Sigmoid colon (tissue), 7 donors: ENCODE measurements at regions of chr4 and their contacts with region 1.

Region 1: GRCh38 chr4:86934771-86935565 is at the start of gene AFF1:
- DNase-seq: peak; percentile 97
- H3K4me3 ChIP-seq: peak within 1 kb of the TSS; percentile 81 to 97 (median 93)
- H3K27ac ChIP-seq: peak within 1 kb of the TSS; percentile 95 to 99 (median 99)
- H3K4me1 ChIP-seq: peaks cover 0 to 42% (median 29%) of the 10 kb centered on the region in 4 donors
- H3K27me3 ChIP-seq: no peaks in the 10 kb centered on the region
- CTCF ChIP-seq: peak in 1 of 4 experiments; percentile 46
- EP300 ChIP-seq: peak in 1 of 4 donors; percentile 41
- POLR2A ChIP-seq: peak; percentile 20 to 47
- total RNA-seq, gene AFF1: 61.7 to 100 (median 85.4) TPM

Region 2: DNA sequence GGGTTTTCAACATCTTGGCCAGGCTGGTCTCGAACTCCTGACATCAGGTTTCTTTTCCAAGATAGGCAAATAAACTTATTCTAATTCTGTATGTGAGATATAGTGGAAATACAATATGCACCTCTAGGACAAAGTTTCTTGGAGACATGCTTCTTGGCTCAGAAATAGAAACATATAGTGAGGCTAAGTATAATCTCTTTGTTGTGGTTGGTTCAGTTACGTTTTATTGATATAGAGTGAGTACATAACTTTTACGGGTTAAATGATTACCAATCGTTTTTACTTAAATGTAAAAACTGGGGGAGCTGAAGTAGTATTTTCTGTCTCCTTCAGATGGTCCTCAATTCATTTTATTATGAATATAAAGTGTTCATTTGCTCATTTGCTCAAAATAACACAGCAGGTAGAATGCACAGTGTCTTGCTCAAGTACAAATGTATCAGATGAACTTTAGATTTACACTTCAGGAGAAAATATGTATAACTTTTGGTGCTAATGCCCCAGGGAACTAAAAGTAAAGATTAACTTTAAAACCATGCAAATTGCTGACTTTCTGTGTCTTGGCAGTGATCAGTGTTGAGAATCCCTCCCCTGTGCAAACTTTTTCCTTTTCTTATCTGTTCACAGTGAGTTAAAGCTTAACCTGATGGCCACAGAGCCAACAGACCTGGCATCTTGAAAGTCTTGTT is 77.4 kb after region 1 on chr4:
- intact Hi-C with region 1: no loop called
- DNase-seq: no peak
- H3K4me3 ChIP-seq: no peak overlapping the region
- H3K27ac ChIP-seq: peak overlapping the region; percentile 34 to 96 (median 81)
- H3K4me1 ChIP-seq: peaks cover 0 to 91% (median 88%) of the 10 kb centered on the region in 4 donors
- H3K27me3 ChIP-seq: no peaks in the 10 kb centered on the region
- CTCF ChIP-seq: no peak
- EP300 ChIP-seq: no peak
- POLR2A ChIP-seq: no peak

Region 3: DNA sequence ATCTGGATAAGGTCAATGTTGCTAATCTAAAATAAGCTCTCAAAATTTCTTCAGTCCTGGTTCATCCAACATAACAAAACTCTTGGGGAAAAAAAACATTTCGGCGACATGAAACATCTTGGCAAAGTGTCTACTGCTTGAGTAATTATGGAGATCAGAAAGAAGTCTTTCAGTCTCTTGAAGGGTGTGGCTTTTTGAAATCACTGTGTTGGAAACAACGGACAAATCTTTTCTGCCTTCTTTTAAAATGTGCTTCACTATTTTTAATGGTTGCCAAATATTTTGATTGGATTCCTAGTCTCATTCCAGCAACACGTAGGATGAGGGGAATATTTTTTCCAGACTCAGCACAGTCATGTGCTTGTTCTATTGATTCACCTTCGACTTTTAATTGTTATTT is 146.9 kb after region 1 on chr4:
- intact Hi-C with region 1: loop called (anchors 5 kb)
- DNase-seq: no peak
- H3K4me3 ChIP-seq: no peak overlapping the region
- H3K27ac ChIP-seq: peak overlapping the region; percentile 77 to 87 (median 85)
- H3K4me1 ChIP-seq: peaks cover 0 to 87% (median 72%) of the 10 kb centered on the region in 4 donors
- H3K27me3 ChIP-seq: no peaks in the 10 kb centered on the region
- CTCF ChIP-seq: no peak
- EP300 ChIP-seq: no peak
- POLR2A ChIP-seq: no peak

Region 4: GRCh38 chr4:87120411-87121199 is 185.6 kb after region 1 on chr4:
- intact Hi-C with region 1: loop called (anchors 2 kb)
- DNase-seq: peak; percentile 88
- H3K4me3 ChIP-seq: peak overlapping the region; percentile 20 to 44 (median 38)
- H3K27ac ChIP-seq: peak overlapping the region; percentile 86 to 88 (median 86)
- H3K4me1 ChIP-seq: peaks cover 0 to 76% (median 61%) of the 10 kb centered on the region in 4 donors
- H3K27me3 ChIP-seq: no peaks in the 10 kb centered on the region
- CTCF ChIP-seq: no peak
- EP300 ChIP-seq: no peak
- POLR2A ChIP-seq: peak; percentile 19 to 61

Region 5: GRCh38 chr4:87130985-87131703 is 196.2 kb after region 1 on chr4:
- intact Hi-C with region 1: no loop called
- DNase-seq: no peak
- H3K4me3 ChIP-seq: no peak overlapping the region
- H3K27ac ChIP-seq: no peak overlapping the region
- H3K4me1 ChIP-seq: peaks cover 0 to 8% (median 0%) of the 10 kb centered on the region in 4 donors
- H3K27me3 ChIP-seq: no peaks in the 10 kb centered on the region
- CTCF ChIP-seq: no peak
- EP300 ChIP-seq: no peak
- POLR2A ChIP-seq: no peak

Region 6: DNA sequence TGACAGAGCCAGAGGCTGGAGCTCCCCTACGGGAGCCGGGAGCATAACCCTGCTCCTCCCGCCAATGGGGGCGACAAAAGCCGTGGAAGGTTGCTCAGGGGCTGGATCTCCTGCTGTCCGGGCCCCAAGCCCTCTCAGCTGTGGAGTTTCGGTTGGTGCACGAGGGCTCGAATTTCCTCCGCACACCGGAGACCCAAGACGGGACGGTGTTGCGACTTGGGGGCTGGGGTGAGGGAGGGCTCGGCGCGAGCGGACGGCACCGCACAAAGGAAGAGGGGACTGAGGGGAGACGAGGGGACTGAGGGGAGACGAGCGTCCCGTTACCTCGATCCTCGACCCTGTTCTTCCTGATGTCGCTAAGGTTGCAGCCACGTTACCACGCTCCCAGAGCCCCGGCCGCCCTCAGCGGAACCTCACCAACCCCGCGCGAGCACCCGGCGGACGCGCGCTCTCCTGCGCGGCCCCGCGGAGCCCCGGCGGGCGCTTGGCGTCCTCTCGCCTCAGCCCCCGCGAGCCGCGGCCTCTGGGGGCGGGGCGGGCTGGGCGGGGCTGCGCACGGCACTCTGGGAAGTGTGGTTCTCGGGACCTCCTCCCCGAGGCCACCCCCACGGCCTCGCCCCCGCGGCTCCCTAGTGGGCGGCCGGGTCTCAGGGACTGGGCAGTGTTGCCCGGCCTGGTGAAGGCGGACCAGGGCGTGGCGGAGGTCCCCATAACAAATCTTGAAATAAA is 285.3 kb after region 1 on chr4 and contains the start of gene KLHL8:
- intact Hi-C with region 1: loop called (anchors 5 kb)
- DNase-seq: peak; percentile 91
- H3K4me3 ChIP-seq: peak within 1 kb of the TSS; percentile 77 to 96 (median 91)
- H3K27ac ChIP-seq: peak within 1 kb of the TSS; percentile 92 to 94 (median 92)
- H3K4me1 ChIP-seq: peaks cover 0 to 15% (median 8%) of the 10 kb centered on the region in 4 donors
- H3K27me3 ChIP-seq: no peaks in the 10 kb centered on the region
- CTCF ChIP-seq: no peak
- EP300 ChIP-seq: no peak
- POLR2A ChIP-seq: peak; percentile 21 to 41
- total RNA-seq, gene KLHL8: 9.0 to 21.4 (median 12.2) TPM